PC-3 (cell line): ENCODE measurements at regions of chr2 and their contacts with region 1.

Region 1: DNA sequence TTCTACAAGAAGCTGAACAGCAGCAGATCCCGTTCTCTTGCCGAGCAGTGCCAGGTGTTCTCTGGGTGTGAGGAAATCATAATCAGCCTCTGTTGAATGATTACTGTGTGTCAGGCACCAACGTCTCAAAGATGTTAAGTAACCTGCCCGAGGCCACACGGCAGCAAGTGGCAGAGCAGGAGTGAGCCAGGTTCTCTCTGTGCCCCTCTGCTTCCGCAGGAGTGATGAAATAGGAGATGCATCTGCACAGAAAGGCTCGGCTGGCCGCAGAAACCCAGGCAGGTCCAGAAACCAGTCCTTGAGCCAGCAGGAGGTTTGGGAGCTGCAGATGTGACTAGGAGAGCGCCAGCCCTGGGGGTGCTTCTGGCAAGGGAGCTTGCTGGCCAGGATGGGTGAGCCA is 68.4 kb downstream of the COPS7B start:
- DNase-seq: no peak
- ATAC-seq: no peak
- H3K4me3 ChIP-seq: no peak overlapping the region
- H3K27ac ChIP-seq: no peak overlapping the region
- H3K4me1 ChIP-seq: no peaks in the 10 kb centered on the region
- H3K27me3 ChIP-seq: peaks cover 19% of the 10 kb centered on the region
- CTCF ChIP-seq: no peak

Region 2: GRCh38 chr2:231900486-231900942 is 45.8 kb after region 1 on chr2:
- CTCF ChIA-PET with region 1: no interaction called
- POLR2A ChIA-PET with region 1: no interaction called
- intact Hi-C with region 1: loop called (anchors 5 kb)
- DNase-seq: peak; percentile 90
- ATAC-seq: peak; percentile 97
- H3K4me3 ChIP-seq: no peak overlapping the region
- H3K27ac ChIP-seq: no peak overlapping the region
- H3K4me1 ChIP-seq: 0 out of 2 replicates have a peak, but pooled peaks cover 2% of the 10 kb centered on the region
- H3K27me3 ChIP-seq: no peaks in the 10 kb centered on the region
- CTCF ChIP-seq: peak; percentile 83

Region 3: GRCh38 chr2:232162186-232162585 is 307.5 kb after region 1 on chr2:
- CTCF ChIA-PET with region 1: no interaction called
- POLR2A ChIA-PET with region 1: no interaction called
- intact Hi-C with region 1: no loop called
- DNase-seq: no peak
- ATAC-seq: no peak
- H3K4me3 ChIP-seq: no peak overlapping the region
- H3K27ac ChIP-seq: no peak overlapping the region
- H3K4me1 ChIP-seq: peaks cover 4% of the 10 kb centered on the region; the same call in 1 of the 2 replicates
- H3K27me3 ChIP-seq: no peaks in the 10 kb centered on the region
- CTCF ChIP-seq: no peak